Dorsolateral prefrontal cortex (tissue), 120 donors: ENCODE measurements at regions of chr10 and their contacts with region 1.

Region 1: DNA sequence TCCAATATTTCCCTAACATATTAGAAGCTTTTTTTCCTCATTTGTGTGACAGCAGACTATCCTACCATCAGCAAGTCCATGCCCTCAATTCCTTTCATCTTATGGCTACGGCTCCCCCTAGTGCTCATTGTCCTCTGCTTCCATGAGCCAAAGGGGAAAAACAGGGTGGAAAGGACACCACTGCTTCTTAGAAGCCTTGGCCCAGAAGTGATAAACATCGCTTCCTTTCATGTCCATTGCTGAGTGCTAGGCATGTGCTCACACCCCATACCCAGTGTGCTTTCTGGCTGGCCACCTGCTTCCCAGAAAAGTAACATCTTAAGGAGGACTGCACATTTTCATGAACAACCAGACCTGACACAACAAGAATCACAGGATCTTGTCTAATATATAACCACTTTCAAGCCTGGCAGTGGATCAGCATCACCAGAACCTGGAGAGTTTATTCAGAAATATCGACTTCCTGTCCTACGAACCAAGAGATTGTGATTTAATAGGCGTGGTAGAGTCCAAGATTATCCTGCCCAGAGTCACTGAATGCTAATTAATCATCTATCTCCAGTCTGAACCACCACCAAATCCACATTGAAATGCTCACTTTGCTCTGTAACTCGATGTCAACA is 650.5 kb upstream of the SORCS1 start:
- DNase-seq: peak in 8 of 10 donors; percentile 10 to 55 (median 36)
- H3K4me3 ChIP-seq: no peak overlapping the region
- H3K27ac ChIP-seq: no peak overlapping the region
- H3K27me3 ChIP-seq: peaks cover 0 to 5% (median 0%) of the 10 kb centered on the region in 45 donors
- CTCF ChIP-seq: peak in 55 of 56 donors; percentile 19 to 78 (median 61)

Region 2: GRCh38 chr10:106705681-106706100 is 1109.3 kb before region 1 on chr10:
- intact Hi-C with region 1: loop called in 1 of 2 experiments (anchors 5 kb)
- DNase-seq: peak in 9 of 10 donors; percentile 29 to 85 (median 67)
- H3K4me3 ChIP-seq: peak overlapping the region in 24 of 59 donors; percentile 2 to 56 (median 33)
- H3K27ac ChIP-seq: no peak overlapping the region
- H3K27me3 ChIP-seq: peaks cover 0 to 2% (median 0%) of the 10 kb centered on the region in 45 donors
- CTCF ChIP-seq: peak; percentile 63 to 92 (median 85)

Region 3: GRCh38 chr10:107264742-107265141 is 550.2 kb before region 1 on chr10:
- intact Hi-C with region 1: no loop called
- DNase-seq: no peak
- H3K4me3 ChIP-seq: no peak overlapping the region
- H3K27ac ChIP-seq: no peak overlapping the region
- H3K27me3 ChIP-seq: no peaks in the 10 kb centered on the region
- CTCF ChIP-seq: peak in 2 of 56 donors; percentile 4 to 15

Region 4: GRCh38 chr10:107952649-107953556 is 137.9 kb after region 1 on chr10:
- intact Hi-C with region 1: no loop called
- DNase-seq: no peak
- H3K4me3 ChIP-seq: no peak overlapping the region
- H3K27ac ChIP-seq: no peak overlapping the region
- H3K27me3 ChIP-seq: no peaks in the 10 kb centered on the region
- CTCF ChIP-seq: no peak

Region 5: DNA sequence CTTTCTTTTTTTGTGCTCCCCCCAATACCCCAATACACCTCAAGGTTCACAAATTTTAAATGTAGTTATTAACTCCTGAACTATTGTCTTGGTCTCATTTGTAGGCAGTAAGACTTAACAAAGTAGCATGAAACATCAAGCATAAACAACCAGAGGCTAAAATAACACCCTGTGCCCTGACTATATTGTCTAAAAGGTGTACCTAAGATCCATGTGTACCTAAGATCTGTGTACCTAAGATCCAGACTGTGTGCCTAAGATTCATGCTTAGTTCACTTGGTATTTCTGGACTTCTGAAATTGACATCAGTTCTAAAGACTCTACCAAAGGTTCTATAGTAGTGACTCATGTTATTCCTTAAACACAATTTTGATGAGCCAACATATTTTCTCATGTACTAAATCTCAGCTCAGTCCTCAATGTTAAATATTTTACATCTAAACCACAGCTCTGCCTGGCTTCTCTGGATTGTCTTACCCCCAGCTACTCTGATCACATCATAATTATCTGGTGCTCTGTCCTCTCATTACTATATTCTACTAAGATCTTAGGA is 151.8 kb after region 1 on chr10:
- intact Hi-C with region 1: no loop called
- DNase-seq: no peak
- H3K4me3 ChIP-seq: no peak overlapping the region
- H3K27ac ChIP-seq: no peak overlapping the region
- H3K27me3 ChIP-seq: peaks cover 0 to 3% (median 0%) of the 10 kb centered on the region in 45 donors
- CTCF ChIP-seq: no peak